Aorta (tissue), 5 donors: ENCODE measurements at regions of chr11 and their contacts with region 1.

Region 1: GRCh38 chr11:45289369-45289768 is 3.2 kb upstream of the SYT13 start:
- DNase-seq: no peak
- ATAC-seq: no peak
- H3K4me3 ChIP-seq: no peak overlapping the region
- H3K27ac ChIP-seq: no peak overlapping the region
- H3K4me1 ChIP-seq: no peaks in the 10 kb centered on the region
- H3K27me3 ChIP-seq: peaks cover 0 to 2% of the 10 kb centered on the region in 2 donors

Region 2: GRCh38 chr11:45332276-45332934 is 43.0 kb after region 1 on chr11:
- intact Hi-C with region 1: loop called in 1 of 2 experiments (anchors 2 kb)
- DNase-seq: no peak
- ATAC-seq: peak; percentile 85
- H3K4me3 ChIP-seq: no peak overlapping the region
- H3K27ac ChIP-seq: no peak overlapping the region
- H3K4me1 ChIP-seq: no peaks in the 10 kb centered on the region
- H3K27me3 ChIP-seq: no peaks in the 10 kb centered on the region

Region 3: DNA sequence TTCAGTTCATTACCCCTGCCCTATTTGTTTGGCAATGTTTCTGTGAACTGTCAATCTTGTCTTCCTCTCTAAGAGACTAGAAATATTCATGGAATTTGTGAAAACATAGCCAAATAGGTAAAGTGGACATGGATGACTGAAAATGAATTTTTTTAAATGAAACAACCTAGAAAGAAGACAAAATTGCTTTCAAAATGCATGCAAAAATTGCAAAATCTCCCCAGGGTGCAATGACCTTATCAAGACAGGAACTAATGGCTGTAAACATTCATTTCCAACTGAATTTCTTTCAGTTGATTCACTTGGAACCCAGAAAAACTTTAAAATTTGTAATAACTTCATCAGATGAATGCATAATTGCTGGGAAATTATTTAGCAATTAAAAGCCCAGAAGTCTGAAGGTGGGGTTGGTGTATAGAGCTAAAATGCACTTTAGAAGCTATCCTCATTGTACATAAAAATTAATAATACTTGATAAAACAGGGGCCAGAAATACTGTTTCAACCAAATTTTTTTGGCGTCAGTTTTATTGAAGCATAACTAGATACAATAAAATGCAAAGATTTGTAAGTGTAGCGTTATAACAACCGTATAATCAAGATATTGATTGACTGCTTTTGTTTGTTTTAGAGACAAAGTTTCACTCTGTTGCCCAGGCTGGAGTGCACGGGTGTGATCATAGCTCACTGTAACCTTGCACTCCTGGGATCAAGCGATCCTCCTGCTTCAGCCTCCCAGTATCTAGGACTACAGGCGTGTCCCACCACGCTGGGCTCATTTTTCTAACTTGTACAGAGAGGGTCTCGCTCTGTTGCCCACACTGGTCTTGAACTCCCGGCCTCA is 488.0 kb after region 1 on chr11:
- intact Hi-C with region 1: no loop called
- DNase-seq: no peak
- ATAC-seq: no peak
- H3K4me3 ChIP-seq: no peak overlapping the region
- H3K27ac ChIP-seq: no peak overlapping the region
- H3K4me1 ChIP-seq: no peaks in the 10 kb centered on the region
- H3K27me3 ChIP-seq: no peaks in the 10 kb centered on the region